Ovary (tissue), 10 donors: ENCODE measurements at regions of chr7 and their contacts with region 1.

Region 1: GRCh38 chr7:36526863-36527548 is 137.3 kb downstream of the ANLN start:
- DNase-seq: no peak
- H3K4me3 ChIP-seq: no peak overlapping the region
- H3K27ac ChIP-seq: no peak overlapping the region
- H3K4me1 ChIP-seq: no peaks in the 10 kb centered on the region
- H3K27me3 ChIP-seq: no peaks in the 10 kb centered on the region
- CTCF ChIP-seq: no peak
- EP300 ChIP-seq: no peak
- POLR2A ChIP-seq: no peak

Region 2: DNA sequence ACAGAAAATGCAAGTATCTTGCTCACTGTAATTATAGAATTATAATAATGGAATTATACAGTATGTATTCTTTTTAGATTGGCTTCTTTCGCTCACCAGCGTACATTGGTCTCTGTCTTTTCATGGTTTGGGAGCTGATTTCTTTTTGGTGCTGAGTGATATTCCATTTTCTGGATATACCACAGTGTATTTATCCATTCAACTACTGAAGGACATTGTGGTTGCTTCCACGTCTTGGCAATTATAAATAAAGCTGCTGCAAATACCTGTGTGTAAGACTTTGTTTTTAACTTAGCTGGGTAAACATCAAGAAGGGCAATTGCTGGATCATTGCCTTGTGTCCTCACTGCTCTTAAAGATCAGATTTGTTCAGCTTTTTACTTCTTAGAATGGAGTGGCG is 670.8 kb before region 1 on chr7:
- intact Hi-C with region 1: loop called in 1 of 4 experiments (anchors 5 kb)
- DNase-seq: no peak
- H3K4me3 ChIP-seq: no peak overlapping the region
- H3K27ac ChIP-seq: no peak overlapping the region
- H3K4me1 ChIP-seq: peaks cover 3% of the 10 kb centered on the region
- H3K27me3 ChIP-seq: no peaks in the 10 kb centered on the region
- CTCF ChIP-seq: no peak
- EP300 ChIP-seq: no peak
- POLR2A ChIP-seq: no peak

Region 3: DNA sequence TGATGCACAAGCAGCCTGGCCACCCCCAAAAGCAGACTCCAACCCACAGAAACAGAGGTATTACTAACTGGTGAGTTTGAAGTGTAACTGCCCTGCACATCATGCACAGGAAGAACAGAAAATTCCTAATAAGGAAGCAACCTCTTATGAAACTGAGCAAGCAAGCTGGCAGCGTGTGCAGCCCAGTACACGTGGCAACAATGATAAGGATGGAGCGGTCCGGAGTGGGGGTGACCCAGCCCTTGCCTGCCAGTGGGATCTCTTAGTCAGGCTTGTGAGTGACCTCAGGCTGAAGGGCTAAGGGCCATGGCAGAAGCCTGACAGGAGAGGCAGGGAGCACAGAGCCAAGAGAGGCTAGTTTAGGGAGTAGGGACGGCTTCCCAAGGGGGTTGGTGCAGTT is 219.3 kb after region 1 on chr7:
- intact Hi-C with region 1: no loop called
- DNase-seq: no peak
- H3K4me3 ChIP-seq: no peak overlapping the region
- H3K27ac ChIP-seq: no peak overlapping the region
- H3K4me1 ChIP-seq: no peaks in the 10 kb centered on the region
- H3K27me3 ChIP-seq: no peaks in the 10 kb centered on the region
- CTCF ChIP-seq: no peak
- EP300 ChIP-seq: no peak
- POLR2A ChIP-seq: no peak